Left cardiac atrium (tissue), 4 donors: ENCODE measurements at regions of chr10 and their contacts with region 1.

Region 1: GRCh38 chr10:63711867-63712716 is 190.9 kb downstream of the REEP3 start:
- DNase-seq: peak; percentile 96
- ATAC-seq: peak; percentile 93

Region 2: GRCh38 chr10:62732841-62733653 is 979.0 kb before region 1 on chr10:
- intact Hi-C with region 1: no loop called
- DNase-seq: no peak
- ATAC-seq: peak in 1 of 2 donors; percentile 57

Region 3: DNA sequence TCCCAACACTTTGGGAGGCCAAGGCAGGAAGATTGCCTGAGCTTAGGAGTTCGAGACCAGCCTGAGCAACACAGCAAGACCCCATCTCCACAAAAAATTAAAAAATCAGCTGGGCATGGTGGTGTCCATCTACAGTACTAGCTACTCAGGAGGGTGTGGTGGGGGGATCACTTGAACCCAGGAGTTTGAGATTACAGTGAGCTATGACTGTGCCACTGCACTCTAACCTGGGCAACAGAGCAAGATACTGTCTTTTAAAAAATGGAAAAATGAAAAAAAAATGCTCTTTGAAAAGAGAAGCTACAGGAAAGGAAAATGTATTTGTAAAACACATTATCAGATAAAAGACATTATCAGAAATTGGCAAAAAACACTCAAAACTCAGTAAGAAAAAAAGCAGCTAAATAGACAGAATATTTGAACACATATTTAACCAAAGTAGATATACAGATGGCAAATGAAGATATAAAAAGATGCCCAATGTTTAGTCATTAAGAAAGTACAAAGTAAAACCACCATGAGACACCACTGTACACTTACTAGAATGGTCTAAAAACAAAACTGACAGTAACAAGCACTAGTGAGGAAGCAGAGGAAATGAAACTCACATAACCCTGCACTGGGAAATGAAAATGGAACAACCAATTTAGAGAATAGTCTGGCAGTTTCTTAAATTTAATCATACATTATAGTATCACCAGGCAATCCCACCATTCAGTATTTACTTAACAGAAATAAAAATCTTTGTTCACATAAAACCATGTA is 538.4 kb before region 1 on chr10:
- intact Hi-C with region 1: loop called in 1 of 2 experiments (anchors 10 kb)
- DNase-seq: no peak
- ATAC-seq: peak in 1 of 2 donors; percentile 46

Region 4: DNA sequence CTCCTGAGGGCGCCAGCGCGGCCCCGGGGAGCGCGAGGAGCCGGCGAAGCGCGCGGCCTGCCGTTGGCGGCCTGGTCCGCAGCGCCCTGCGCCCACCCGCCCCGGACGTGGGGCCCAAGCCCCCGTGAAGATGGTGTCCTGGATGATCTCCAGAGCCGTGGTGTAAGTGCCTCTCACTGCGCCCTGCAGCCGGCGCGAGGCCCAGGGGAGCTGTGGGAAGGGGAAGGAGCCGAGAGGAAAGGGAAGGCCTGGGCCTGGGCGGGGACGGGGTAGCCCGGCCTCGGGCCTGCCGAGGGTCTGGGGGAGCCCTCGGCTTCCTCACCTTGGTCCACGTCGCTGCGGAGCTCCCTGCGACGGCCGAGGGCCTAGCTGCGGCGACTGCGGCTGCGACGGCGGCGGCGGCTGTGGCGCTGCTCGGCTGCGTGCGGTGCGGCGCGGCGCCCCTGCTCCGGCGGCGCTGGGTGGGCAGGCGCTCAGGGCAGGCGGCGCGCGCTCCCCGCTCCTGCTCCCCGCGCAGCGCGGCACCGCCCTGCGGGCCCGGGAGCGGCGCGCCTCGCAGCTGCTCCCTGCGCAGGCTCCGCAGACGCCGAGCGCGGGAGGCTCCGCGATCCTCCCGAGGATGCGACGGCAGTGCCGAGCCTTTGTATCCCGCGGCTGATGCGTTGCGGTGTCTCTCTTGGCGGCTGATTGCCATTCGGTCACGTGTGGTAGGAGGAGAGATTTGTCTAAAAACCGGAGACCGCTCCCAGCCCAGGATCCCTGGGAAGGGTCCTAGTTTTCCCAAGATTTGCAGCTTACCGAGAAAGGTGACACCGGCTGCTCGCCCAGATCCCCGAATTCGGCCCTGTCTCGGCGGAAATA is 190.4 kb before region 1 on chr10:
- intact Hi-C with region 1: loop called in 1 of 2 experiments (anchors 10 kb)
- DNase-seq: peak; percentile 73
- ATAC-seq: peak; percentile 90 to 93

Region 5: DNA sequence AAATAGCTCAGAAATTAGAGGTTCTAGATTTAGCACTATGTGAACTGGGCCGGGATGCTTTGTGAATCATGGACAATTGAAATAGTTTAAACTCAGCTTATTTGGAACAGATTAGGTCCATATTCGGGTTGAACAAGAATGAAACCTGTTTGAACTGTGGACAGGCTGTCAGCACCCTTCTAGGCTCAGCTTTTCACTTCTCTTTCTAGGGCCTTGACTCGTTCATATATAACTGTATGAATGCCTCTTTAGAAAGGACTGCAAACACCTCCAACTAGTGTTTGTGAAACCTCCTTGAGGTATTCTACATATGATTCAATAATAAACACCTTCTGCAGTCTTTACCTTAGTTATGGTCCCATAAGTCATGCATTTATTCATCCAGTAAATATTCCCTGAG is 75.3 kb before region 1 on chr10:
- intact Hi-C with region 1: loop called in 1 of 2 experiments (anchors 5 kb)
- DNase-seq: no peak
- ATAC-seq: no peak

Region 6: GRCh38 chr10:63670291-63670898 is 41.7 kb before region 1 on chr10:
- intact Hi-C with region 1: loop called in 1 of 2 experiments (anchors 5 kb)
- DNase-seq: peak; percentile 48
- ATAC-seq: peak; percentile 66 to 68